Cardiac septum (tissue), 1 donor: ENCODE measurements at regions of chr5 and their contacts with region 1.

Region 1: DNA sequence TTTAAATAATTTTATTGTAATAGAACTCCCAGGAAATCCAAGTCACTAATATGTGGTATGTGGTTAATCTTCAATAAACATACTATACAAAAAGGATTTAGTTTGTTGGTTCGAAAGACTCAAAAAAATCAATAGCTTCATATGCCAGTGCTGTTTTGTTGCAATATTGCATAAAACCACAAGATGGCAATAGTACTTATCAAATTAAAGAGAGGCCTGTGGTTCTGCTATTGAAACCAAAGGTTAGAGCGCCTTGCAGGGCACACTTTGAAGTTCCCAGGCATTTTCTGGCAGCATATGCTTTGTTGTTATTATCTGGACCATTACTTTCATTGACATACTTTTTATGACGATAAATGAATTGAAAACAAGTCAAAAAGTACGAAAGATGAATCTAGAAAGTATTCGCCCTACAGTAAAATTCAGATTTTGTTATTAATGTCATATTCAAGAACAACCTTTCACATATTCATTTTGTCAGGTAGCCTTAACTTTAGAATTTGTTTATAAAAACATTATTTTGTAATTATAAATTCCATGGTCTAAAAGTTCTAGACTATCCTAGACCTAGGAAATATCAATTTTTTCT is 316.3 kb downstream of the MCTP1 start:
- DNase-seq: no peak

Region 2: DNA sequence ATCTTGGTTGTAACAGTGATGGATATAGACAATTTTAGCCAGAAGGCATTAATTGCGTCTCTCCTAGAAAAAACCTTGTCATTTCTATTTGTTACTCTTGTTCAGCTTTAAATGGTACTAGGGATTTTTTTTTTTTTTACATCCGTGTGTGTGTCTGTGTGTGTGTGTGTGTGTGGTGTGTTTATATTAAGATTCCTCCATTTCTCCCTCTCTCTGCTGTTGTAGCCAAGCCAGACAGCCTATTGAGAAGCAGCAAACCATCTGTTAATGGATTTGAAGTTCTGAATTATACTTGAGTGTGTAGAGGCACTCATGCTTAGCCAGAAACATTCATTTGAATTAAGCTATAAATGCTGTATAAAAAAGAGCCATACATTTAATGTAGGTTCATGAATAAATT is 277.8 kb before region 1 on chr5:
- intact Hi-C with region 1: no loop called
- DNase-seq: no peak

Region 3: GRCh38 chr5:95238560-95239325 is 270.1 kb after region 1 on chr5:
- intact Hi-C with region 1: loop called (anchors 2 kb)
- DNase-seq: no peak

Region 4: GRCh38 chr5:95261437-95262175 is 293.0 kb after region 1 on chr5:
- intact Hi-C with region 1: loop called (anchors 5 kb)
- DNase-seq: no peak